MCF 10A (cell line): ENCODE measurements at regions of chr6 and their contacts with region 1.

Region 1: GRCh38 chr6:36196880-36197548 is 470 bp downstream of the BRPF3 start:
- DNase-seq: peak; percentile 96
- H3K4me3 Mint-ChIP-seq: peak overlapping the region; percentile 87
- H3K27ac Mint-ChIP-seq: peak overlapping the region; percentile 27
- H3K4me1 Mint-ChIP-seq: peaks cover 13% of the 10 kb centered on the region
- H3K27me3 Mint-ChIP-seq: peaks cover 10% of the 10 kb centered on the region
- CTCF ChIP-seq: no peak

Region 2: DNA sequence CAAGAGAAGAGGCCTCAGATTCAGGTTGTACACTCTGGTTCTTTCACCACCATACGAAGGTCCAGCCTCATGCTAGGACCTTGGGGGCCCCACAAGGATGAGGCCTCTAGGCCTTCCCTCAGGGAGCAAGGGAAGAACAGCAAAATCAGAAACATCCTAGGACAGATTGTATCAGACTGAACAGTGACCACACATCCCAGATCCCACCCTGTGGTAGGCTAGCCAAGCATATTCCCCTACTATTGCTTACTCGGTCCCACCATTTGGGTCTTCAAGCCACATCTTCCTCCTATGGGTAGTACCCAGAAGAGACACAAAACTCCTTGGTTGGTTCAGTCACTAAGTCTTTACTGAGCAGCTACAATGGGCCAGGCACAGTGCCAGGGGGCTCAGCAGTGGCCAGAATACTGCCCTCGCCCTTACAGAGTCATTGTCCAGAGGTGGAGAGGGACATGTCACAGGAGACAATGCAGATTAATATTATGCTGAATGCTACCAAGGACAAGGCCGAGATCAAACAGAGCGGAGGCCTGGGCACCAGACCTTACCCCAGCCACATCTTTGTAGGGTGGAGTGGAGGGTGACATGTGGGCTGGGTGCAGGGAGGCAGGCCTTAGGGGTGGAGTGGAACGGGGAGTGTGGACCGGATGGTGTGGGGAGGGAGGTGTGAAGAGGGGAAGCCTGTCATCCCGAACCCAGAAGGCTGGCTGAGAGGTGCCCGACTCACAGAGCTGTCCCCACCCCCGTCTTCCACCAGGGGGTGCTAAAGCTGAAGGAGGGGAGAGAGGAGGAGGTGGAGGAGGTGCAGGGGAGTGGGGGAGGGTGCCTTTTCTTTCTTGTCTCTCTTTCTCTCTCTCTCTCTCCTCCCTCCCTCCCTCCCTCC is 73.5 kb before region 1 on chr6:
- CTCF ChIA-PET with region 1: interaction called, 7 read pairs
- POLR2A ChIA-PET with region 1: no interaction called
- intact Hi-C with region 1: loop called (anchors 1 kb)
- DNase-seq: peak; percentile 92
- H3K4me3 Mint-ChIP-seq: no peak overlapping the region
- H3K27ac Mint-ChIP-seq: no peak overlapping the region
- H3K4me1 Mint-ChIP-seq: peaks cover 18% of the 10 kb centered on the region
- H3K27me3 Mint-ChIP-seq: no peaks in the 10 kb centered on the region
- CTCF ChIP-seq: peak; percentile 80

Region 3: GRCh38 chr6:36160147-36160760 is 36.8 kb before region 1 on chr6:
- CTCF ChIA-PET with region 1: no interaction called
- POLR2A ChIA-PET with region 1: no interaction called
- intact Hi-C with region 1: no loop called
- DNase-seq: no peak
- H3K4me3 Mint-ChIP-seq: no peak overlapping the region
- H3K27ac Mint-ChIP-seq: no peak overlapping the region
- H3K4me1 Mint-ChIP-seq: no peaks in the 10 kb centered on the region
- H3K27me3 Mint-ChIP-seq: no peaks in the 10 kb centered on the region
- CTCF ChIP-seq: no peak